ENCODE measurements at regions of chr11 and their contacts with region 1.

Region 1: GRCh38 chr11:14907411-14908213 is 15.6 kb upstream of the CYP2R1 start:
- DNase-seq: peak; percentile 74 to 80
- H3K4me3 ChIP-seq: no peak overlapping the region
- H3K4me3 Mint-ChIP-seq: peak overlapping the region; percentile 67
- H3K27ac Mint-ChIP-seq: no peak overlapping the region
- H3K4me1 ChIP-seq: peaks cover 6% of the 10 kb centered on the region; the same call in 1 of the 2 replicates
- H3K4me1 Mint-ChIP-seq: peaks cover 12% of the 10 kb centered on the region
- H3K27me3 ChIP-seq: no peaks in the 10 kb centered on the region
- H3K27me3 Mint-ChIP-seq: no peaks in the 10 kb centered on the region
- CTCF ChIP-seq: peak; percentile 68 to 79

Region 2: GRCh38 chr11:14643697-14644225 is 263.9 kb before region 1 on chr11 and contains the start of gene PDE3B:
- CTCF ChIA-PET with region 1: interaction called, 12 read pairs
- POLR2A ChIA-PET with region 1: no interaction called
- intact Hi-C with region 1: no loop called
- DNase-seq: peak; percentile 92 to 93
- H3K4me3 ChIP-seq: peak within 1 kb of the TSS; percentile 97
- H3K4me3 Mint-ChIP-seq: peak within 1 kb of the TSS; percentile 65
- H3K27ac Mint-ChIP-seq: peak within 1 kb of the TSS; percentile 62
- H3K4me1 ChIP-seq: peaks cover 17% of the 10 kb centered on the region; the same call in 1 of the 2 replicates
- H3K4me1 Mint-ChIP-seq: peaks cover 15% of the 10 kb centered on the region
- H3K27me3 ChIP-seq: no peaks in the 10 kb centered on the region
- H3K27me3 Mint-ChIP-seq: no peaks in the 10 kb centered on the region
- CTCF ChIP-seq: peak; percentile 5 to 15
- total RNA-seq, gene PDE3B: 20.6 and 21.8 TPM in 2 replicates

Region 3: DNA sequence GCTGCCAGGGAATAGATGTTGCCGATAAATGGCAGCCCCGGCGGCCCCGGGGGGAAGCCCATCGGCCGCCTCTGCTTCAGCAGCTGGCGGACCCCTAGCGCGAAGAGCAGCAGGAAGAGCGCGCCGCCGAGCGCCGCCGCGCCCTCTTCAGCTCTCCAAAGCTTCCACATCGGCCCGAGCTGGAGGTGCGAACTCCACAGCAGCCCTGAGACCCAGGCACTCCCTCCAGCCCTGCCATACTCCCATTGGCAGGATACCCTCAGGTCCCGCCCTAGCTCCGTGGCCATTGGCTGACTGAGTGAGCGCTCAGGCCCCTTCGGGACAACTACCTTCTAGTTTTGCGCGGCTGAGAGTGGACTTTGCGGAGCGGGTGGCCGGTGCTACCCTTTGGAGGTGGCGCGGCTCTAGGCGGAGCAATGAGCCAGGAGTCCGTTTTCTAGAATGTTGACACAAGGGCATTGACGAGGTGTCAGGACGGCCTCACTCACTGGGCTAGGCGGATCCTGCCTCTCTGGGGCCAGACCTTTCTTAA is 15.5 kb before region 1 on chr11 and contains the start of gene CYP2R1:
- CTCF ChIA-PET with region 1: interaction called, 31 read pairs
- POLR2A ChIA-PET with region 1: interaction called, 8 read pairs
- intact Hi-C with region 1: no loop called
- DNase-seq: peak; percentile 99
- H3K4me3 ChIP-seq: peak within 1 kb of the TSS; percentile 78
- H3K4me3 Mint-ChIP-seq: peak within 1 kb of the TSS; percentile 99
- H3K27ac Mint-ChIP-seq: peak within 1 kb of the TSS; percentile 88
- H3K4me1 ChIP-seq: peaks cover 27% of the 10 kb centered on the region
- H3K4me1 Mint-ChIP-seq: peaks cover 26% of the 10 kb centered on the region
- H3K27me3 ChIP-seq: no peaks in the 10 kb centered on the region
- H3K27me3 Mint-ChIP-seq: no peaks in the 10 kb centered on the region
- CTCF ChIP-seq: no peak
- total RNA-seq, gene CYP2R1: 33.0 and 34.5 TPM in 2 replicates

Region 4: GRCh38 chr11:15006139-15006759 is 98.6 kb after region 1 on chr11:
- CTCF ChIA-PET with region 1: interaction called, 51 read pairs
- POLR2A ChIA-PET with region 1: no interaction called
- intact Hi-C with region 1: loop called (anchors 1 kb)
- DNase-seq: peak in 1 of 2 experiments; percentile 30
- H3K4me3 ChIP-seq: no peak overlapping the region
- H3K4me3 Mint-ChIP-seq: no peak overlapping the region
- H3K27ac Mint-ChIP-seq: no peak overlapping the region
- H3K4me1 ChIP-seq: no peaks in the 10 kb centered on the region
- H3K4me1 Mint-ChIP-seq: no peaks in the 10 kb centered on the region
- H3K27me3 ChIP-seq: no peaks in the 10 kb centered on the region; the same call in 1 of the 2 replicates
- H3K27me3 Mint-ChIP-seq: peaks cover 18% of the 10 kb centered on the region
- CTCF ChIP-seq: peak; percentile 58 to 62

Region 5: GRCh38 chr11:15101072-15101709 is 193.6 kb after region 1 on chr11:
- CTCF ChIA-PET with region 1: interaction called, 13 read pairs
- POLR2A ChIA-PET with region 1: no interaction called
- intact Hi-C with region 1: no loop called
- DNase-seq: peak; percentile 62 to 71
- H3K4me3 ChIP-seq: no peak overlapping the region
- H3K4me3 Mint-ChIP-seq: no peak overlapping the region
- H3K27ac Mint-ChIP-seq: no peak overlapping the region
- H3K4me1 ChIP-seq: no peaks in the 10 kb centered on the region
- H3K4me1 Mint-ChIP-seq: no peaks in the 10 kb centered on the region
- H3K27me3 ChIP-seq: no peaks in the 10 kb centered on the region
- H3K27me3 Mint-ChIP-seq: peaks cover 8% of the 10 kb centered on the region
- CTCF ChIP-seq: peak; percentile 88 to 96

Region 6: GRCh38 chr11:15123849-15124248 is 216.2 kb after region 1 on chr11:
- CTCF ChIA-PET with region 1: no interaction called
- POLR2A ChIA-PET with region 1: no interaction called
- intact Hi-C with region 1: no loop called
- DNase-seq: no peak
- H3K4me3 ChIP-seq: no peak overlapping the region
- H3K4me3 Mint-ChIP-seq: no peak overlapping the region
- H3K27ac Mint-ChIP-seq: no peak overlapping the region
- H3K4me1 ChIP-seq: no peaks in the 10 kb centered on the region
- H3K4me1 Mint-ChIP-seq: no peaks in the 10 kb centered on the region
- H3K27me3 ChIP-seq: no peaks in the 10 kb centered on the region; the same call in 1 of the 2 replicates
- H3K27me3 Mint-ChIP-seq: peaks cover 16% of the 10 kb centered on the region
- CTCF ChIP-seq: no peak

Region 7: DNA sequence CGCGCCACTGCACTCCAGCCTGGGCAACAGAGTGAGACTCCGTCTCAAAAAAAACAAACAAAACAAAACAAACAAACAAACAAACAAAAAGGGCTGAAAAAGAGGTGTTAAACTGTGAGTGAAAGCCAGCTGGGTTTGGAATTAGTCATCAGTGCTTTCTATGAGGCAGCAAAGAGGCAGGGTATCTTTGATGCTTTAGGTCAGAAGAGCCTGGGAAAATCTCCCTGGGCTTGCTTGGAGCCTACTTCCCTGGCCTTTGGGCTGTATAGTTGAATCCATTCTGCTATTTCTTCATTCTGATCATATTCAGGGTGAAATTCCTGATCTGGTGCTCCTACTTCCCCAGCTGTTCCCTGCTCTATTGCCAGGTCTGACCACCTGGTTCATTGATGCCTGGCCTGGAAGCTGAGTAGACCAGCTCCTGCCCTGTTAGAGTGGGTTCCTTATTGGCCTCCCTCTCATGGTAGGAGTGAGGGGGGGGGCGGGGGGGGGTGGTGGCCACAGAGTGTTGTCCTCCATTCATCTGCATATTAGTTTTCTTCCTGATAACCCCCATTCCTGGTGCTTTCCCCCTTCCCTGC is 272.7 kb after region 1 on chr11:
- CTCF ChIA-PET with region 1: interaction called, 10 read pairs
- POLR2A ChIA-PET with region 1: no interaction called
- intact Hi-C with region 1: no loop called
- DNase-seq: no peak
- H3K4me3 ChIP-seq: no peak overlapping the region
- H3K4me3 Mint-ChIP-seq: no peak overlapping the region
- H3K27ac Mint-ChIP-seq: no peak overlapping the region
- H3K4me1 ChIP-seq: no peaks in the 10 kb centered on the region
- H3K4me1 Mint-ChIP-seq: no peaks in the 10 kb centered on the region
- H3K27me3 ChIP-seq: no peaks in the 10 kb centered on the region
- H3K27me3 Mint-ChIP-seq: peaks cover 10% of the 10 kb centered on the region
- CTCF ChIP-seq: no peak

Region 8: GRCh38 chr11:15202626-15203025 is 295.0 kb after region 1 on chr11:
- CTCF ChIA-PET with region 1: no interaction called
- POLR2A ChIA-PET with region 1: no interaction called
- intact Hi-C with region 1: no loop called
- DNase-seq: no peak
- H3K4me3 ChIP-seq: no peak overlapping the region
- H3K4me3 Mint-ChIP-seq: no peak overlapping the region
- H3K27ac Mint-ChIP-seq: no peak overlapping the region
- H3K4me1 ChIP-seq: no peaks in the 10 kb centered on the region
- H3K4me1 Mint-ChIP-seq: no peaks in the 10 kb centered on the region
- H3K27me3 ChIP-seq: no peaks in the 10 kb centered on the region
- H3K27me3 Mint-ChIP-seq: peaks cover 16% of the 10 kb centered on the region
- CTCF ChIP-seq: no peak